Sigmoid colon (tissue), 7 donors: ENCODE measurements at regions of chr1 and their contacts with region 1.

Region 1: GRCh38 chr1:6624710-6625583 is at the start of gene THAP3:
- DNase-seq: peak; percentile 95
- H3K4me3 ChIP-seq: peak within 1 kb of the TSS; percentile 63 to 78 (median 74)
- H3K27ac ChIP-seq: peak within 1 kb of the TSS; percentile 88 to 94 (median 92)
- H3K4me1 ChIP-seq: peaks cover 0 to 48% (median 40%) of the 10 kb centered on the region in 4 donors
- H3K27me3 ChIP-seq: no peaks in the 10 kb centered on the region
- CTCF ChIP-seq: no peak
- EP300 ChIP-seq: no peak
- POLR2A ChIP-seq: no peak
- total RNA-seq, gene THAP3: 22.7 to 30.6 (median 26.6) TPM

Region 2: GRCh38 chr1:6393400-6394187 is 231.4 kb before region 1 on chr1 and contains the start of gene ACOT7:
- intact Hi-C with region 1: loop called (anchors 10 kb)
- DNase-seq: peak; percentile 92
- H3K4me3 ChIP-seq: peak within 1 kb of the TSS; percentile 47 to 67 (median 64)
- H3K27ac ChIP-seq: peak within 1 kb of the TSS; percentile 94 to 98 (median 98)
- H3K4me1 ChIP-seq: peaks cover 0 to 16% (median 15%) of the 10 kb centered on the region in 4 donors
- H3K27me3 ChIP-seq: no peaks in the 10 kb centered on the region
- CTCF ChIP-seq: peak in 2 of 4 experiments; percentile 24 to 27
- EP300 ChIP-seq: no peak
- POLR2A ChIP-seq: peak in 1 of 2 donors; percentile 22
- total RNA-seq, gene ACOT7: 17.9 to 26.5 (median 22.2) TPM

Region 3: GRCh38 chr1:6454856-6455751 is 169.8 kb before region 1 on chr1:
- intact Hi-C with region 1: no loop called
- DNase-seq: no peak
- H3K4me3 ChIP-seq: no peak overlapping the region
- H3K27ac ChIP-seq: no peak overlapping the region
- H3K4me1 ChIP-seq: peaks cover 0 to 21% (median 2%) of the 10 kb centered on the region in 4 donors
- H3K27me3 ChIP-seq: peaks cover 11 to 95% (median 64%) of the 10 kb centered on the region in 3 donors
- CTCF ChIP-seq: no peak
- EP300 ChIP-seq: no peak
- POLR2A ChIP-seq: no peak

Region 4: DNA sequence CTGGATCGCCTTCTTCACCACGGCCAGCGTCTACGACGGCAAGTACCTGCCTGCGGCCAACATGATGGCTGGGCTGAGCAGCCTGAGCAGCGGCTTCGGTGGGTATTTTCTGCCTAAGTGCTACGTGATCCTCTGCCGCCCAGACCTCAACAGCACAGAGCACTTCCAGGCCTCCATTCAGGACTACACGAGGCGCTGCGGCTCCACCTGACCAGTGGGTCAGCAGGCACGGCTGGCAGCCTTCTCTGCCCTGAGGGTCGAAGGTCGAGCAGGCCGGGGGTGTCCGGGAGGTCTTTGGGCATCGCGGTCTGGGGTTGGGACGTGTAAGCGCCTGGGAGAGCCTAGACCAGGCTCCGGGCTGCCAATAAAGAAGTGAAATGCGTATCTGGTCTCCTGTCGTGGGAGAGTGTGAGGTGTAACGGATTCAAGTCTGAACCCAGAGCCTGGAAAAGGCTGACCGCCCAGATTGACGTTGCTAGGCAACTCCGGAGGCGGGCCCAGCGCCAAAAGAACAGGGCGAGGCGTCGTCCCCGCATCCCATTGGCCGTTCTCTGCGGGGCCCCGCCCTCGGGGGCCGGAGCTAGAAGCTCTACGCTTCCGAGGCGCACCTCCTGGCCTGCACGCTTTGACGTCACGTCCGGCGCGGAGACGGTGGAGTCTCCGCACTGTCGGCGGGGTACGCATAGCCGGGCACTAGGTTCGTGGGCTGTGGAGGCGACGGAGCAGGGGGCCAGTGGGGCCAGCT is 45.4 kb before region 1 on chr1 and contains the start of gene ZBTB48:
- intact Hi-C with region 1: loop called (anchors 5 kb)
- DNase-seq: peak; percentile 100
- H3K4me3 ChIP-seq: peak within 1 kb of the TSS; percentile 79 to 93 (median 86)
- H3K27ac ChIP-seq: peak within 1 kb of the TSS; percentile 92 to 97 (median 94)
- H3K4me1 ChIP-seq: peaks cover 0 to 34% (median 29%) of the 10 kb centered on the region in 4 donors
- H3K27me3 ChIP-seq: no peaks in the 10 kb centered on the region
- CTCF ChIP-seq: no peak
- EP300 ChIP-seq: no peak
- POLR2A ChIP-seq: peak; percentile 95
- total RNA-seq, gene ZBTB48: 14.4 to 26.8 (median 16.3) TPM